GM10248 (cell line): ENCODE measurements at regions of chr3 and their contacts with region 1.

Region 1: DNA sequence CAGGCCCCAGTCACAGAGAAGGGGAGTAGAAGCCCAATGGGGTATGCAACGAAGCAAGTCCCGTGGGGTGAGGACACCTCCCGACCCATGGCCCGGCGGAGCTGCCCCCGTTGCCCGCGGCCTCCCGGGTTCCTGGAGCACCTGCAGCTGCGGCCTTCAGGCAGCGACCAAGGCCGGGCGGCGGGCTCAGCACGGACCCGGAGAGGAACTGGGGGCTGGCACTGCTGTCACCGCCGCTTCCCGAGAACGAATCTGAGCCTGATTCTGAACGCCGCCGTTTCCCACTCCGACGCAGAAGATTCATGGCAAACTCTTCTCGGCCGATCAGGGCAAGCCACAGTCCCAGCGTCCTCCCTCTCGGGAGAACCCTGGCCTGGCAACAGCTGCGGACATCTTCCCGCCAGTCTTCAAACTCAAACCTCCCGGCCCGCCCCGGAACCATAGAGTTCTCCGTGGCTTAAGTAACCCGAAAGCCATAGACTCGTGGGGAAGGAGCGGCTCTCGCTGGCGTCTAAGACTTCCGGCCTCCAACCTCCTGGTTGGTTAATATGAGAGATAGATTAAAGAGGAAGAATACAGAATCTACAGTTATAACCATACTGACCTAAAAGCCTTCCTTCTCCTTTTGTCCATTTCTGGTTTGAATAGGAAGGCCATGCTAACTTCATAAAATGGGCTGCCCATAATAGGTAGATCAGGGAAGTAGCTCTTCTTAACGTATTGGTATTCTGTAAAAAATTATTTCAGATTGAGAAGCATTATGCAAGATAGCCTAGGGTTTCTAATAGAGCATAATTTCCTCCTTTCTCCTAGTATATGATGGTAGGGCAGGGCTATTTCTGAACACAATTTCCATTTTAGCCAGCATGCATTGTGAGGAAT is at the start of gene POLQ:
- DNase-seq: peak; percentile 91
- CTCF ChIP-seq: no peak

Region 2: GRCh38 chr3:121529308-121529707 is 16.5 kb before region 1 on chr3:
- CTCF ChIA-PET with region 1: interaction called, 11 read pairs
- POLR2A ChIA-PET with region 1: no interaction called
- DNase-seq: peak; percentile 23
- CTCF ChIP-seq: peak; percentile 35